ENCODE measurements at regions of chr1 and their contacts with region 1.

Region 1: DNA sequence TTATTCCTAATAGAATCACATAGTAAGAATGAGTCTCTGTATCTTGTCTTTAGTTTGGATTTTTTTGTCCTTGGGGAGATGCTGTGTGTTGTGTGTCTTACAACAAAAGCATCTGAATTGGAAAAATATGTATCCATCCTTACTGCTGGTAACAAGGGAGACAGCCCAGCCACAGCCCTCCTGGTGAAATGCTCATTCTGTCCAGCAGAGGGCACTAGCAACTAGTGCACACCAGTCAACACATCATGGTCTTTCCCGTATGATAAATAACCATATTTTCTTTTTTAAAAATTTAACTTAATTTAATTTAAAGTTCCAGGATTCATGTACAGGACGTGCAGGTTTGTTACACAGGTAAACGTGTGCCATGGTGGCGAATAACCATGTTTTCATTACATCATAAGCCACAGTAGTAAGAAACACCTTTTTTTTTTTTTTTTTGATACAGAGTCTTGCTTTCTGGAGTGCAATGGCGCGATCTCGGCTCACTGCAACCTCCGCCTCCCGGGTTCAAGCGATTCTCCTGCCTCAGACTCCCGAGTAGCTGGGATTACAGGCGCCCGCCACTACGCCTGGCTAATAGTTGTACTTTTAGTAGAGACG is 245.1 kb downstream of the PTBP2 start:
- DNase-seq: peak; percentile 57 to 74
- H3K4me3 ChIP-seq: peak overlapping the region; percentile 42; the same call in 1 of the 2 replicates
- H3K27ac ChIP-seq: no peak overlapping the region
- H3K4me1 ChIP-seq: 0 out of 2 replicates have a peak, but pooled peaks cover 3% of the 10 kb centered on the region
- H3K27me3 ChIP-seq: no peaks in the 10 kb centered on the region
- CTCF ChIP-seq: peak; percentile 99

Region 2: GRCh38 chr1:97636941-97637340 is 670.3 kb after region 1 on chr1:
- CTCF ChIA-PET with region 1: no interaction called
- POLR2A ChIA-PET with region 1: no interaction called
- intact Hi-C with region 1: no loop called
- DNase-seq: no peak
- H3K4me3 ChIP-seq: no peak overlapping the region
- H3K27ac ChIP-seq: no peak overlapping the region
- H3K4me1 ChIP-seq: no peaks in the 10 kb centered on the region; the same call in 1 of the 2 replicates
- H3K27me3 ChIP-seq: no peaks in the 10 kb centered on the region
- CTCF ChIP-seq: no peak

Region 3: GRCh38 chr1:98468111-98468717 is 1501.6 kb after region 1 on chr1:
- CTCF ChIA-PET with region 1: no interaction called
- POLR2A ChIA-PET with region 1: no interaction called
- intact Hi-C with region 1: loop called (anchors 2 kb)
- DNase-seq: peak; percentile 4 to 59
- H3K4me3 ChIP-seq: no peak overlapping the region
- H3K27ac ChIP-seq: no peak overlapping the region
- H3K4me1 ChIP-seq: no peaks in the 10 kb centered on the region
- H3K27me3 ChIP-seq: no peaks in the 10 kb centered on the region
- CTCF ChIP-seq: peak; percentile 98